IMR-90 (cell line): ENCODE measurements at regions of chr1 and their contacts with region 1.

Region 1: GRCh38 chr1:163315773-163316374 is 5.9 kb upstream of the NUF2 start:
- DNase-seq: peak; percentile 68
- ATAC-seq: peak; percentile 57
- H3K4me3 ChIP-seq: no peak overlapping the region
- H3K27ac ChIP-seq: no peak overlapping the region
- H3K4me1 ChIP-seq: peaks cover 2% of the 10 kb centered on the region; the same call in 1 of the 2 replicates
- H3K27me3 ChIP-seq: no peaks in the 10 kb centered on the region
- CTCF ChIP-seq: peak; percentile 82
- POLR2A ChIP-seq: no peak
- RAD21 ChIP-seq: peak; percentile 84

Region 2: DNA sequence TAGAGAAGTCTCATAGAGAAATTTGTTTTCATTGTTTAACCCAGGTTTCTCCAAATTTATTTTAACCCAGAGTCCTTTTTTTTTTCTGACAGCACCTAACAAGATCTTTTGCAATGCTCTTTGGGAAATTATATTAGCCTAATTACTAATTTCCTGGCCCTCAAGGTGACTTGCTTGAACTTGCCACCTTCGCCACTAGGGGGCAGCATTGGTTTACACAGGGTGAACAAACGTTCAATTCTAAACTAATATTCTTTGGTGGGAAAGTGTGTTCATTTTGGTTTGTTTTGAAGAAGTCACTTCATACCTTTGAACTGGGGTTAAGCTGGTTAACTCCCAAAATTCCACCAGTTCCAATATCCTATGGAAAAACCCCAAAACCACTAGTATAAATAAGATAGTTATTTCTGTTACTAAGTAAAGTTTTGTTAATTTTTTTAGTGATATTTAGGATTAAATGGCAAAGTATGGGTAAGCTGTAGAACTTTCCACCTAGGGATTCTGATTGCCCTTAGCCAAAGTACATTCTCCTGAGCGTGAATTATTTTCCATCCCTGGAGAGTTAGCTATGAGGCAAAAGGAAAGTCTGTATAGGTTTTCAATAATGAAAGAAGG is 467.9 kb before region 1 on chr1:
- CTCF ChIA-PET with region 1: interaction called, 9 read pairs
- POLR2A ChIA-PET with region 1: no interaction called
- dilution Hi-C with region 1: loop called (anchors 25 kb)
- in situ Hi-C with region 1: no loop called
- intact Hi-C with region 1: loop called (anchors 1 kb)
- DNase-seq: peak; percentile 78
- ATAC-seq: peak; percentile 58; the same call in 1 of the 2 replicates
- H3K4me3 ChIP-seq: no peak overlapping the region
- H3K27ac ChIP-seq: no peak overlapping the region
- H3K4me1 ChIP-seq: peaks cover 6% of the 10 kb centered on the region; the same call in 1 of the 2 replicates
- H3K27me3 ChIP-seq: no peaks in the 10 kb centered on the region
- CTCF ChIP-seq: peak; percentile 86
- POLR2A ChIP-seq: no peak
- RAD21 ChIP-seq: peak; percentile 80

Region 3: DNA sequence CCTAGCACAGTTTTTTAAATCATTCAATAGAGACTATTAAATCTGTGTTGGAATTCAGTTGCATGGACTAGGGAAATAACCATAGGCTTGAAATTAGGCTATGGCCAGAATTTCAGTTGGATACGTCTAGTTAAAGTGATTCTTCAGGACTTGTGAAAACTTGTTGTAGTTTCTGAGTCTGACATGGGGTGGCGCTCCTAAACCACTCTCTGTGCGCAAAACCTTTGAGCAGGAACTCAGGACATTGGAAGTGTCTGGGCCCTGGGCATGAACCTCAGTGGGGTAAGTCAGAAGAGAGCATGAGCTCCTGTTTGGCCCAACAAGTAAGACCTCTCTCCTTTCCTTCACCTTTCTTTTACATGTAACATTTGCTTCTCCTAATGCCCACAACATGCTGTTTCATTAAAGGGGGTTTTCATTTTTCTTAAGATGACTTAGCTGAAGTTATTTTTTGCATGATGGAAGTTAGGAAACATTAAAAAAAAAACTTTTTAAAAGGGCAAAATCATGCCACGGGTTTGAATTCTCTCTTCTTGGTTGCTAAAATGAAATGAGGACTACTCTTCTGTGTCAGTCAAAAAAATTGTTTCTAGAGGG is 437.8 kb before region 1 on chr1:
- CTCF ChIA-PET with region 1: interaction called, 6 read pairs
- POLR2A ChIA-PET with region 1: no interaction called
- dilution Hi-C with region 1: loop called (anchors 25 kb)
- in situ Hi-C with region 1: no loop called
- intact Hi-C with region 1: loop called (anchors 1 kb)
- DNase-seq: peak; percentile 80
- ATAC-seq: peak; percentile 85
- H3K4me3 ChIP-seq: no peak overlapping the region
- H3K27ac ChIP-seq: no peak overlapping the region
- H3K4me1 ChIP-seq: peaks cover 2% of the 10 kb centered on the region; the same call in 1 of the 2 replicates
- H3K27me3 ChIP-seq: no peaks in the 10 kb centered on the region
- CTCF ChIP-seq: peak; percentile 95
- POLR2A ChIP-seq: peak; percentile 40; the same call in 1 of the 2 replicates
- RAD21 ChIP-seq: peak; percentile 100

Region 4: DNA sequence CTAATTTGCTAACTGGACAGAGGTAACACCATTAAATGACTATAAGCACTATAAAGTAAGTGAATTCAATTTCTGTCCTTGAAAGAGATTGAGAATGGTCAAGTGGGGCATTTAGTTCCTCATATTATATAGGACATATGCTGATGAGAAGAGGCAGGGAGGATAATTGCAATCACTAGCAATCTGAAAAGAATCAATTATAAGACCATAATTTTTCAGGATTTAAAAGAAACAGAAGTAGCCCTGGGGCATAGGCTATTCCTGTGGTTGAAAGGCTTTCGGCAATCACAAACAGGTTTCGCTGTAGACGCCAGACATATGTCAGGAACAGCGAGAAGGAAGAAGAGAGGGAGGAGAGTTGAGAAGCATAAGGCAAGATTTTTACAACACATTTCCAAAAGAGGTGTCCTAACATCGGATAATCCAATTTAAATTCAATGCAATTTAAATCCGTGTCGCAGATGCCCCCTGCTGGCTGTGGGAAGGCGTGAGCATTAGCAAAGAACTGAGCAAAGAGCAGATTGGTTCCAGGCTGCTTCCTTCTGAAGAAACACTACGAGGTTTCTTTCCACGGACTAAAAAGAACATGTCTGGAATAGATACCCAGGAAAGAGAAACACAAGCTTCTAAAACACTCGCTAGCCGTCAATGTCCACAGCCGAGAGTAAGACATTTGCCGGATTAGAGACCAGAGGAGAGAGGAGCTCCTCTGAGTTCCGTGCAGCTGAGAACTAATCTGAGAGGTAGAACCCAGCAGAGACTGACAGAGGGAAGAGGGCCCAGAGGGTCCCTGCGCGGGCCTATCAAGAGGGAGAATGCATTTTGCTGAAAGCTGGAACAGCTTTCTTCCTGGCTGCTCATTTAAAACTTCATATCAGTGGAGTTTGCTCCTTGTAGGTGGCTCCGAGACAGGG is 141.1 kb before region 1 on chr1:
- CTCF ChIA-PET with region 1: interaction called, 12 read pairs
- POLR2A ChIA-PET with region 1: no interaction called
- dilution Hi-C with region 1: no loop called
- in situ Hi-C with region 1: no loop called
- intact Hi-C with region 1: loop called (anchors 2 kb)
- DNase-seq: peak; percentile 65
- ATAC-seq: peak; percentile 74
- H3K4me3 ChIP-seq: no peak overlapping the region
- H3K27ac ChIP-seq: no peak overlapping the region
- H3K4me1 ChIP-seq: peaks cover 10% of the 10 kb centered on the region
- H3K27me3 ChIP-seq: no peaks in the 10 kb centered on the region
- CTCF ChIP-seq: peak; percentile 94
- POLR2A ChIP-seq: no peak
- RAD21 ChIP-seq: peak; percentile 89